Dendritic cell treated with granulocyte-macrophage colony-stimulating factor and Interleukin-4, amounts not matched to agents 40 ng/mL and 50 ng/mL, for 4 days (primary cell): ENCODE measurements at regions of chr2 and their contacts with region 1.

Region 1: DNA sequence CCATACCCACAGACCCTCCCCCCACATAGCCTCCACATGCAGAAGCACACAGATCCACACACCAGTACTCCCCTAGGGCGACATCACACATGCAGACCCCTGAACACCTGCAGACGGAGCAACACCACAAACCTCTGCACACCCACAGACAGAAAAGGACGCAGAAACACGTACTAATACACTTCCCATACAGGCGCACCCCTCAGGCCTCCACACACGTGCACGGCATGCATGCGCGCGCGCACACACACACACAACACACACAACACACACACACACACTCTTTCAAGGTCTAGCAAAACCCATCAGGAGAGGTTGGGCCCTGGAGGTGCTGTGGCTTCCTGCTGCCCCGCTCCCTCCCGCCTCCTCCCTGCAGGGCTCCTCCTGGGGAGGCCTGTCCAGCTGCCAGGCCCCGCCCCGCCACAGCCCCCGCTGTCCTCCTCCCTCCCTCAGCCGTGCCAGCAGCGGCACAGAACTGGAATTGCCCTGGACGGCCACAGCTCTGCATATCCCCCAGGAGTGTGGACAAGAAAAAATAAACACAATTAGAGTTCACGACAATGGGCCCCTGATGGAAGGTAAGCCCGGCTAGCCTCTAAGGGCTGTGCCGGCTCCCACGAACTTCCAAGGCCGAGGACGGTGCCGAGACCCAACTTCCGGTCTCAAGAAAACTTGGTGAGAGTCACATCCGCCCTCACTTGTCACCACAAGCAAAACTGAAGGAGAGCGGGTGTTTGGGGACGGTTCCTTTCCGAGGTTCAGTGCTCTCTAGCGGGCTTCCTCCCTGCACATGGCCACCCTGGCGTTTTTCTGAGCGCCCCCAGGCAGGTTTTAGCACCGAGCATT is 6.8 kb downstream of the ZFP36L2 start:
- H3K4me3 Mint-ChIP-seq: peak overlapping the region; percentile 83
- H3K27ac Mint-ChIP-seq: peak overlapping the region; percentile 83
- H3K4me1 Mint-ChIP-seq: peaks cover 43% of the 10 kb centered on the region
- H3K27me3 Mint-ChIP-seq: no peaks in the 10 kb centered on the region

Region 2: DNA sequence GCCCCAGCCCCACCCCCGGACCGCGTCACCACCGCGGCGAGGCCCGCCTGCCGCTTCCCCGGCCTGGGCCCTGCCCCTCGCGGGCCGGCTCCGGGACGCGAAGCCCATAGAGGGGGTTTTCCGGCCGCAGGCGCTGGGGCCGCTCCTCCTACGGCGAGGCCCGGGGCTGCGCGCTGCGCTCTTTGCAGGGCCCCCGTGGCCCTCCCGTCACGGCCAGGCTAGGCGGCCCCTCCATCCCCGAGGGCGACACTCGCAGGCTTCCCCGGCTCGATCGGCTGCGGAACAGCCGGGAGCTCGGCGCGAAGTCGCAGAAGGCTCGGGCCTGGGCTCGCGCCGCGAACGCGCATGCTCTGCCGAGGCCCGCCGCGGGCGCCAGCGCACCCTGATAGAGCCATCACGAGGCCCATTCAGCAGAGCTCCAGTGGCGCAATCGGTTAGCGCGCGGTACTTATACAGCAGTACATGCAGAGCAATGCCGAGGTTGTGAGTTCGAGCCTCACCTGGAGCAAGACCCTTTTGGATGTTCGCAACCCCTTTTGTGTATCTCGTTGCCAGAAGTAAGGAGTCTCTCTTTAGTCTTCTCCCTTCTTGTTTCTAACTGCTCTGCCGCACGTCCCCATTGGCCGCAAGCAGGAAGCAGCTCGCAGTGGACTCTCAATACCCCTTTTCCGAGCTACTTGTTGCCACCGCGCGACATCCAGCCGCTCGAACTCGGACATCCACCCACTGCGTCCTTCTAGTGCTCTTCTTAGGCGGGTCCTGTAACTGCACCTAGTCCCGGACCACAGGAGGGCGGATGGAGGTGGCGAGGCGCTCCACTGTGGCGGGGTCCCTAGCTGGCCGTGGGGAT is 409.3 kb before region 1 on chr2:
- intact Hi-C with region 1: loop called (anchors 5 kb)
- H3K4me3 Mint-ChIP-seq: peak overlapping the region; percentile 80
- H3K27ac Mint-ChIP-seq: peak overlapping the region; percentile 99
- H3K4me1 Mint-ChIP-seq: peaks cover 46% of the 10 kb centered on the region
- H3K27me3 Mint-ChIP-seq: no peaks in the 10 kb centered on the region

Region 3: GRCh38 chr2:43158259-43158880 is 61.2 kb before region 1 on chr2:
- intact Hi-C with region 1: loop called (anchors 5 kb)
- H3K4me3 Mint-ChIP-seq: peak overlapping the region; percentile 65
- H3K27ac Mint-ChIP-seq: peak overlapping the region; percentile 97
- H3K4me1 Mint-ChIP-seq: peaks cover 80% of the 10 kb centered on the region
- H3K27me3 Mint-ChIP-seq: peaks cover 1% of the 10 kb centered on the region

Region 4: GRCh38 chr2:43370705-43371104 is 151.1 kb after region 1 on chr2:
- intact Hi-C with region 1: no loop called
- H3K4me3 Mint-ChIP-seq: no peak overlapping the region
- H3K27ac Mint-ChIP-seq: no peak overlapping the region
- H3K4me1 Mint-ChIP-seq: peaks cover 38% of the 10 kb centered on the region
- H3K27me3 Mint-ChIP-seq: no peaks in the 10 kb centered on the region

Region 5: GRCh38 chr2:43444989-43445645 is 225.5 kb after region 1 on chr2:
- intact Hi-C with region 1: no loop called
- H3K4me3 Mint-ChIP-seq: no peak overlapping the region
- H3K27ac Mint-ChIP-seq: peak overlapping the region; percentile 34
- H3K4me1 Mint-ChIP-seq: peaks cover 47% of the 10 kb centered on the region
- H3K27me3 Mint-ChIP-seq: no peaks in the 10 kb centered on the region